Posterior vena cava (tissue), 2 donors: ENCODE measurements at regions of chr3 and their contacts with region 1.

Region 1: GRCh38 chr3:18864933-18865731 is 283.2 kb upstream of the KCNH8 start:
- DNase-seq: no peak

Region 2: GRCh38 chr3:18812316-18812715 is 52.8 kb before region 1 on chr3:
- intact Hi-C with region 1: no loop called
- DNase-seq: no peak

Region 3: DNA sequence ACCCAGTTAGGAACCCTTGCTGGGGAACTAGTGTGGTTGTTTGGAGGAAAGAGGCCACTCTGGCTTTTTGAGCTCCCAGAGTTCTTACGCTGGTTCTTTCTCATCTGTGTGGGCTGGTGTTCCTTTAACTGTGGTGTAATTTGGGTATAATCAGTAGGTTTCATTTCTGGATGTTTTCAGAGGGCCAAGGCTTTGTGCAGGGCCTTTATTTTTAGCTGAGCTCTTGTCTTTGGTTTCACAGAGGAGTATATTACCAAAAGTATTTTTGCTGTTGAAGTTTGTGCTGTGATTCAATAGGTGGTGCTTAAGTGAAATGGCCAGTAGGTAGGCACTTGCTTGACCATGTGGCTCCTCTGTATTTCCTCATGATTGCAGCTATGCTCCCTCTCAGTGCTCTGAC is 641.0 kb after region 1 on chr3:
- intact Hi-C with region 1: loop called in 1 of 2 experiments (anchors 5 kb)
- DNase-seq: no peak